Heart left ventricle (tissue), 16 donors: ENCODE measurements at regions of chr6 and their contacts with region 1.

Region 1: DNA sequence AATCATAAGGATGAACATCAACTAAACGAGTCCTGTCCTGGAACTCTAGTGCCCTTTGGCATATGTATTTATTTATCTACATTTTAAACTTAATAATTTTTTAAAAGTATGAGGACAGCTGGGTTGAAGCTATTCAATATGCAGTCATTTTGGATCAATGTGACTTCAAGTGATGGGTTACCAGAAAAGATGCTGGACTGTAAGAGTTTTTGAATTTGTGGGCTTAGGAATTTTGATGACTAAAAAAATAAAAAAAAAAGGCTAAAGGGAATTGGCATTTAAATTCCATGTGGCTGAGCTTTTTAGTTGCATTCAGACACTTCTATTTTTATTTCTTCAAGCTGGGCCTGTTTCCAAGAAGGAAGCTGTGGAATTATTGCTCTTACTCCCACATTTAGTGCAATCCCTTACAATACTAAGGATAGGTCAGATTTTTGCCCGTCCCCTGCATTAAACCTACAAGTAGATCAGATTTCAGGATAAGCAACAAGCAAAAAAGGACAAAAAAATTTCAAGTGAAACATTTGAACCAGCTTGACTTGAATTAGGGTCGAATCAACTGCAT is 704.2 kb upstream of the CITED2 start:
- DNase-seq: peak in 2 of 5 donors; percentile 23 to 43
- ATAC-seq: peak; percentile 15 to 67 (median 56)
- H3K4me3 ChIP-seq: peak overlapping the region in 4 of 12 donors; percentile 5 to 35 (median 21)
- H3K27ac ChIP-seq: peak overlapping the region; percentile 70 to 96 (median 81)
- H3K4me1 ChIP-seq: peaks cover 0 to 32% (median 22%) of the 10 kb centered on the region in 12 donors
- H3K27me3 ChIP-seq: no peaks in the 10 kb centered on the region
- CTCF ChIP-seq: no peak
- POLR2A ChIP-seq: no peak

Region 2: DNA sequence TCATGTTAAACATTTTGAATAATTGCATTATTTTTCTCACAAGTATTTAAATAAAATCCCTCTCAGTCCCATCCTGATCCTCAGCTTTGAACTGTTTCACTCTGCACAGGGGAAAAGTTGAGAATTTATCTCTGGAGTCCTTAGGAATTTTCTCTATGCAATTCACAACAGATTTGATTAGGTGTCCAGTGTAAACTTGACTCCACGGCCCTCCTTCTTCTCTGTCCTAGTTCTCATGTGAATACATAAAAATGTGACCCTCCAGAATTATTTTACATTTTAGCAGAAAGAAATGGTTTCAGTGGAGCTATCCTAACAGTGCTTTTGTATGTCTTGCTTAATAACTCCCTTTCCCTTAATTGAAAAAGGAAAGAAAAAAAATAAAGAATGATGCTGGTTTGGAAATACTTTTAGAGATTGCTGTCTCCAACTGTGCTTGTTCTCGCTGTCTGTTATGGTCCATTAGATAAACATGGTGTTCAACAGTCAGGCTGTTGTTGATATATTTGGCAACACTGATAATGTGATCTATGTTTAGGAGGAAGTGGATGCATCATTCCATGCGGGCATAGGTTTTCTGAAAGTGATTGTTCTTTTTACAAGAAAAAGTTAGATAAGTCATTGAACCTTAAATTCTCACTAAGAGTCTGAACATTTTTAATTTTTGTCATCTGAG is 104.8 kb before region 1 on chr6:
- intact Hi-C with region 1: loop called in 1 of 10 experiments (anchors 10 kb)
- DNase-seq: no peak
- ATAC-seq: peak; percentile 86 to 94 (median 89)
- H3K4me3 ChIP-seq: no peak overlapping the region
- H3K27ac ChIP-seq: peak overlapping the region; percentile 13 to 86 (median 72)
- H3K4me1 ChIP-seq: peaks cover 0 to 27% (median 12%) of the 10 kb centered on the region in 12 donors
- H3K27me3 ChIP-seq: no peaks in the 10 kb centered on the region
- CTCF ChIP-seq: no peak
- POLR2A ChIP-seq: no peak

Region 3: GRCh38 chr6:139981768-139982181 is 96.9 kb before region 1 on chr6:
- intact Hi-C with region 1: loop called in 4 of 10 experiments (anchors 5 to 10 kb)
- DNase-seq: peak in 2 of 5 donors; percentile 22 to 26
- ATAC-seq: peak; percentile 38 to 71 (median 60)
- H3K4me3 ChIP-seq: no peak overlapping the region
- H3K27ac ChIP-seq: peak overlapping the region in 11 of 12 donors; percentile 1 to 71 (median 50)
- H3K4me1 ChIP-seq: peaks cover 0 to 61% (median 33%) of the 10 kb centered on the region in 12 donors
- H3K27me3 ChIP-seq: no peaks in the 10 kb centered on the region
- CTCF ChIP-seq: no peak
- POLR2A ChIP-seq: no peak

Region 4: DNA sequence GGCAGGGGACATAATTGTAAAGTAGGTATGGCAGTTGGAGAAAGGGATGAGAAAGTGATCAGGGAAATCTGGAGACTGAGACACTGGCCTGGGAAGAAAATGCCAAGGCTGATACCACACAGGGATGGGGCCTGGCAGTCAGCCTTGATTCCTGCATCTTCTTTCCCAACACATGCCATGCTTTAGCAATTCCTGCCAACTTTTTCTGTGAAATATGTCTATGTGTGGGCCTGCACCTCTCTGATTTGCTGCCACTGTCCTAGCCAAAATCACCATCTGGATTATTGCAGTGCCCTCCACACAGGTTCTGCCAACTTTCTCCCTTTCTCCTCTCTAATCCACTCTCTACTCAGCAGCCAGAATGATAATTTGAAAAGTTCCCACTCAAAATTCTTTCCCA is 55.6 kb after region 1 on chr6:
- intact Hi-C with region 1: no loop called
- DNase-seq: no peak
- ATAC-seq: no peak
- H3K4me3 ChIP-seq: no peak overlapping the region
- H3K27ac ChIP-seq: no peak overlapping the region
- H3K4me1 ChIP-seq: peaks cover 0 to 11% (median 2%) of the 10 kb centered on the region in 12 donors
- H3K27me3 ChIP-seq: no peaks in the 10 kb centered on the region
- CTCF ChIP-seq: no peak
- POLR2A ChIP-seq: no peak

Region 5: GRCh38 chr6:140436013-140436811 is 357.6 kb after region 1 on chr6:
- intact Hi-C with region 1: loop called in 3 of 10 experiments (anchors 5 kb)
- DNase-seq: no peak
- ATAC-seq: no peak
- H3K4me3 ChIP-seq: no peak overlapping the region
- H3K27ac ChIP-seq: no peak overlapping the region
- H3K4me1 ChIP-seq: peaks cover 0 to 26% (median 10%) of the 10 kb centered on the region in 12 donors
- H3K27me3 ChIP-seq: no peaks in the 10 kb centered on the region
- CTCF ChIP-seq: no peak
- POLR2A ChIP-seq: no peak

Region 6: DNA sequence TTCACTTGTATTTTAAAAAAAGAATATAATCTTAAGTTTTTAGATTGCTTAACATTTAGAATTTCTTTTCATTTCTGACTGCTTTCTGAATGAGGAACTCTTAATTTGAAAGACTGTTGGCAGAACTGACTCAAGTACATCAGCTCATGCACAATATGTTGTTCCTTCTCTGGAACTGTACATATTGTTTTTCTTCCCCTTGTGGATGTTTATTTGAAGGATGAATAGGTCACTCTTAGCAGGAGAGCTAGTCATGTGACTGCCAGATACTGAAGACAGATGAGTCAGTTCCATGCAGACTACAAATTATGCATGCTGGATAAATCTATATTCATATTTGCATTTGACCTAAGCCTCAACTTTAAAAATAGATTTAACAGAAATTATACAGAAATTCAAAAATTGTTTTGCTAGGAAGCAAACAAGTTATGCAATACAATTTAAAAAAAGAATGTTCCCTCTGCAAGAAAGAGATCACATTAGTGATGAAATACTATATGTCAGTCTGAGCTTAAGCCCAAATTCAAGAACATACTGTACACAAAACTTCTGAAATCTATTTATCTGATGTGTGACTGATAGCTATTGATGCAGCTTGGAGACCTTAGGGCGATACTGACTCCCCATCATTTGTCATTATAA is 779.2 kb after region 1 on chr6:
- intact Hi-C with region 1: no loop called
- DNase-seq: no peak
- ATAC-seq: peak; percentile 54 to 91 (median 88)
- H3K4me3 ChIP-seq: no peak overlapping the region
- H3K27ac ChIP-seq: peak overlapping the region in 2 of 12 donors; percentile 45 to 55
- H3K4me1 ChIP-seq: peaks cover 0 to 15% (median 6%) of the 10 kb centered on the region in 12 donors
- H3K27me3 ChIP-seq: no peaks in the 10 kb centered on the region
- CTCF ChIP-seq: no peak
- POLR2A ChIP-seq: no peak